AG04449 (cell line): ENCODE measurements at regions of chr1 and their contacts with region 1.

Region 1: DNA sequence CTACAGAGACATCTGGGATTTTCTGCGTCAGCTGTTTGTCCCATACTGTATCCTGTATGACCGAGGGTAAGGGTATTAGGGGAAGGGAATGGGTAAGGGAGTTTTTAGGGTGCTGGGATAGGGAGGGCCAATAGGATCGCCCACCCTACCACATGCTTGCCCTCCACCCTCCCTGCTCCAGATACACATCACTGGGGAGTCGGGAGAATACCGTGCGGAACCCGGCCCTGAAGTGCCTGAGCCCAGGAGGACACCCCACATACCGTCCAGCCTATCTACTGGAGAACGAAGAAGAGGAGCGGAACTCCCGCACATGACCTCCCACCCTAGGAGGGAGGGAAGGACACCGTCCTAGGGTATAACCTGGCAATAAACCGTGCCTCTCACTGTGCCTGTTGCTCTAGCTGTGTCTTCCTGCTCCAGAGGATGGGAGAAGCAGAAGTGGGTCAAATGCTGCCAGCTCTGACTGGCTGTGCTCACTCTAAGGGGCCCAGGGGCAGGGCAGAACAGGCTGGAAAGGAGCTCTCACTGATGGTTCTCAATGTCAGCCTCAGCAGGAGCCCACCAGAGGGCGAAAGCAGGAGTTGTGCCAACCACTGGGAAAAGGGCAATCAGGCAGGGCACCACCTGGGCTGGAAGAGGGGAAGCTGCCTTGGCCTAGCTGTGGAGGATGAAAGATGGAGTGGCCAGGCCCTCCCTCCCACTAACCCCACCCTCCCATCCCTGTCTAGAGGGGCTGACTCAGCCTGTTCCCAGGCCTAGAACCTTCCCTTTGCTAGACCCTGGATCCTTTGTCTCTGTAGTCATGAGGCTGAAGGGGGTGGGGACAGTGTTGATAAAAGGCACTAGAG is 440 bp upstream of the LENEP start:
- DNase-seq: no peak
- H3K4me3 ChIP-seq: no peak overlapping the region
- CTCF ChIP-seq: peak; percentile 40

Region 2: DNA sequence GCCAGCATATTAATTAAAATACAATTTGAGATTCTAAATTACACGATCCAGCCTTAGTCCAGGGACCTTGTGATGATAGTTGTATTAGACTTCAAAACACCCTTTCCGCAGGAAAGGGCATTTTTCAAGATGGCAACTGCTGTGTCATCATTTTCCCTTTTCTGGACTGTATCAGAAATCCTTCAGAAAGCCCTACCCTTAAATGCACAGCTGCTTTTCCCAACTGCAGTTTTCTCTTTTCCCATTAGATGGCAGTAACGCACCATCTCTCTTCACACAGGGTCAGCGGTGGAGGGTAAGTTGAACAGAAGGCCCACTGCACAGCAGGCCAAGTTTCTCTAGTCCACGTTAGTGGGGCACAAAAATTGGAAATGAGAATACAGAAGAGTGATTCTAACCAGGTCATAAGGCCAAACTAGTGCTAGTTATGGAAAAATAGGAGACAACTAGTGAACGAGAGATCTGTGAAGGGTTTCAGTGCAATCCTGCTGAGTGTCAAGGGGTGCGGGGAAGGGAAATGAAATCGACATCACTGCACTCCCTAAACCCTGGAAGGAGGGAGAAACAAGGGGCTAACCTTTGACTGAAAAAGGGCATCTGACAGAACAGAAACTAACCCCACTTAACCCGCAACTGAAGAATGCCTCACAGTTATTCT is 513.1 kb before region 1 on chr1:
- CTCF ChIA-PET with region 1: interaction called, 10 read pairs
- POLR2A ChIA-PET with region 1: no interaction called
- DNase-seq: no peak
- H3K4me3 ChIP-seq: no peak overlapping the region
- CTCF ChIP-seq: peak; percentile 79

Region 3: DNA sequence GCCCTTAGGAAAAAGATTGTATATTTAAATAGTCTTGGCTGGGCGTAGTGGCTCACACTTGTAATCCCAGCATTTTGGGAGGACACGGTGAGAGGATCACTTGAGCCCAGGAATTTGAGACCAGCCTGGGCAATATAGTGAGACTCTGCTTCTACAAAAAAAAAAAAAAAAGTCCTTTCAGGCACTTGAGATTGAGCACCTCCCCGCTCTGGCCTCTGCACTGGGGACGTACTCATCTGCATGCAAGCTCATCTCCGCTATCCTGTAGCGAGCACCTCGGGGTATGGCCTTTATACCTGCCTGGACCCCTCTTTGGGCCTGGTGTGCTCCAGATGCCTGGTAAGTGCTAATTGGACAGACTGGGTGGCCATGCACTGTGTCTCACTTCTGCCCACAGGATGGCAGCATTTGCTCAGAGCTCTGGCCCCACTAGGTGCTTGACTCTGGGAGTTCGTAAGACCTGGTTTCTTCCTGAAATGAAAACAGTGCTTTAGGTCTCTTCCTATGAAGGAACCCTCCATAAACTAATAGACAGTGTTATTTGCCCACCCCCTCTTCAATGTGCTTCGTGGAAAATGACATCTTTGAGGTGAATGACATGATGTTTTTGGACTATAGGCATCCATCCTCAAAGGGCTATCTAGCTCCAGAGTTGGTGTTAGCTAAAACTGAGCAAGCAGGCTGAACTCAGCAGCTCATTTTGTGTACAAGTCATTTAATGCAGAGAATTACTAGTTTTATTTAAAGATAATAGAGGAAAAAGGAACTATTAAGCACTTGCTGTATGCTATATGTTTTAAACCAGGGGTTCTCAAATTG is 323.3 kb before region 1 on chr1:
- CTCF ChIA-PET with region 1: interaction called, 12 read pairs
- POLR2A ChIA-PET with region 1: no interaction called
- DNase-seq: peak; percentile 21
- H3K4me3 ChIP-seq: no peak overlapping the region
- CTCF ChIP-seq: peak; percentile 78

Region 4: GRCh38 chr1:154847891-154848290 is 145.1 kb before region 1 on chr1:
- CTCF ChIA-PET with region 1: no interaction called
- POLR2A ChIA-PET with region 1: no interaction called
- DNase-seq: no peak
- H3K4me3 ChIP-seq: no peak overlapping the region
- CTCF ChIP-seq: no peak

Region 5: DNA sequence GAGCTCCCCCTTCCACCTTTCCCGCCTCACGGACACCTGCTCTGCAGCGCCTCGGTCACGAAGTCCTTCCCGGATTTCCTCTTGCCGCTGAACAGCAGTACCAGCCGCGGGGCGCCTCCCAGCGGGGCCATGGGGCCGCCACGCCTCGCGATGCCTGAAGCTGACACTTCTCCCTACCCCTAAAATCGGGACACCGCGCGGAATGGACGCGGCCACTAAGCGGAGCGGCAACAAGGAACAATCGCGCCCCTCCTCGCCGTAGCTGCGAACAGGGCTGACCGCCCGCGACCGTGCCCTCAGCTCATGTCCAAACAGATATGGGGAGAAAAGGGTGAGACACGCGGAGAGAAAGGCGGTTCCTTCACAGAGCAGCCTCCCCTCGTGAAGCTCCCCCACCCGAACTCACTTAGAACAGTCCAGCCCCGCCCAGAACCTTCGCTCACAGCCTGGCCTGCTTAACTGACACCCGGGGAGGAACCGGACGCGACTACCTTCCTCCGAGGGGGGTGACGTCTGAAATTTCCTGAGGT is 56.3 kb before region 1 on chr1 and contains the start of gene PMVK:
- CTCF ChIA-PET with region 1: interaction called, 15 read pairs
- POLR2A ChIA-PET with region 1: no interaction called
- DNase-seq: peak; percentile 76
- H3K4me3 ChIP-seq: peak within 1 kb of the TSS; percentile 95
- CTCF ChIP-seq: peak; percentile 46

Region 6: DNA sequence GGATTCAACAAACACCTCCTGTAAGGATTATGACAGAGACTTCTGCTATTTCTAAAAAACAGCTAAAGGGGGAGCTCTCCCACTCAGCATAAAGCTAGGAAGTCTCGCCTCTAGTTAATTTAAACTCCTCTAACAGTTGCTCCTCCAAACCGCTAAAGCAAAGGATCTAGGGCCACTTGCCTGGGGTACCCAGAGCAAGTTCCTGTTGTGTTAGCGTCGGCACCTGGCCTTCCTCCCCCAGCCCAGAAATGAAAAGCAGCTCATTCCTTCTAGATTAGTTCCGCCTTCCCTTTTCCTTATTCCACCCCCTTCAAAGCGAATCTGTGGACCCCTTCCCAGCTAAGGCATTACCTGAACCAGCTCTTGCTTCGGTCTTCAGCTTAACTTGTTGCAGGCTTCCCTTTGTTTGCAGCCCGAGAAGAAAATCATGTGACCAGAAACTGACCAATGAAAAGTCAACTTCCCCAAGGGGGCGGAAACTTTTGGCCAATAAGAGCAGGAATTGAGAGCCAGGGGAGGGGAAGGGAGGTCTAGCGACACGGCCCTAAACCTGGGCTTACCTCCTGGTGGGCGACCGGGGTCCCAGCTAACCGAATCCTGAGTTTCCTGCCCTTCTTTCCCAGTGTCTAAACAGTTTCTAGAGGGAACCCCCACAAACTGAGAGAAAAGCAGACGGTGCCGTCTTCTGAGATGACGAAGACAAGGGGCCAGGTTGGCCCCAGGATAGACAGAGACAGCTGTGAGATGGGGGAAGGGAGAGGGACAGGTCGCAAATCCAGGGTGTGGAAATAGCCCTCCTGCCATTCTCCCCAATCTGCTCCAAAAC is 37.0 kb before region 1 on chr1 and contains the start of gene PBXIP1:
- CTCF ChIA-PET with region 1: interaction called, 70 read pairs
- POLR2A ChIA-PET with region 1: interaction called, 8 read pairs
- DNase-seq: peak; percentile 50
- H3K4me3 ChIP-seq: peak within 1 kb of the TSS; percentile 66
- CTCF ChIP-seq: peak; percentile 31

Region 7: GRCh38 chr1:154974063-154974807 is 18.7 kb before region 1 on chr1 and contains the start of gene CKS1B:
- CTCF ChIA-PET with region 1: interaction called, 176 read pairs
- POLR2A ChIA-PET with region 1: interaction called, 11 read pairs
- DNase-seq: peak; percentile 100
- H3K4me3 ChIP-seq: peak within 1 kb of the TSS; percentile 75
- CTCF ChIP-seq: no peak

Region 8: DNA sequence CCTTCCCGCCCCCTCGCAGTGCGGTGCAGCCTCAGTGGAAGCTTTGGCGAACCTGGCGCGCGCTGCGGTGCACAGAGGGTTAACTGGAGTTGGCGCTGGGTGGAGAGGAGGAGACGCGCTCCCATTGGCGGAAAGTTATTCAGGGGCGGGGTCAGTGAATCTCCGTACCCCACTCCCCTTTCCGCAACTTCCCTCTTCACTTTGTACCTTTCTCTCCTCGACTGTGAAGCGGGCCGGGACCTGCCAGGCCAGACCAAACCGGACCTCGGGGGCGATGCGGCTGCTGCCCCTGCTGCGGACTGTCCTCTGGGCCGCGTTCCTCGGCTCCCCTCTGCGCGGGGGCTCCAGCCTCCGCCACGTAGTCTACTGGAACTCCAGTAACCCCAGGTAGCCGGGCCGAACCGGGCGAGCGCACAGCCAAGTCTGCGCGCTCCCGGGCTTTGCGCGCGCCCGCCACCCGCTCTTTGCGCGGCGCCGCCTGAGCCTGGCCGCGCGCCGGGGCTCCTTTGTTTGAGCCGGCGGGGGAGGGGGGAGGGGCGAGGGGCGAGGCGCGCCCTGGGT is 70.7 kb after region 1 on chr1 and contains the start of gene EFNA4:
- CTCF ChIA-PET with region 1: interaction called, 30 read pairs
- POLR2A ChIA-PET with region 1: no interaction called
- DNase-seq: no peak
- H3K4me3 ChIP-seq: peak within 1 kb of the TSS; percentile 96
- CTCF ChIP-seq: no peak

Region 9: DNA sequence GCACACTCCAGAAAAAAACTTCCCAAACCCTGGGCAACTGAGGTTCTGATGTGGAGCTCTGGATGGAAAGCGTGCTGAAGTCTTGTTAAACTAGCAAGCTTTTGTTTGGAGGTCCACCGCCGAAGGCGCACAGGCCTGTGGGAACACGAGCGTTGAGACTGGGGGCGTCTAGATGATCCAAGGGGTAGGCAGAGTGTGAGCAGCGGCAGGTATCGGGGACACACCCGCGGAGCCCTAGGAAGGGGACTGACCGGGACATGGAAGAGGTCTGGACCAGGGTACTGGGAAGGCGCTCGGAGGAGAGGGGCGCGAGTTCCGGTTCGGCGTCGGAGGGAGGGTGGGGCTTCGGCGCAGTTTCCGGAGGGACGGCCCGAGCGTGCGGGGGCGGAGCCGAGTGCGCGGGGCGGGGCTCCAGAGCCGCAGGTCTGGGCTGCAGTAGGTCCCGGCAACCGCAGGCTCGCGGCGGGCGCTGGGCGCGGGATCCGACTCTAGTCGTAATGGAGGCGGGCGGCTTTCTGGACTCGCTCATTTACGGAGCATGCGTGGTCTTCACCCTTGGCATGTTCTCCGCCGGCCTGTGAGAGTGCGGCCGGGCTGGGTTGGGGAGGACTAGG is 142.6 kb after region 1 on chr1 and contains the start of gene SLC50A1:
- CTCF ChIA-PET with region 1: no interaction called
- POLR2A ChIA-PET with region 1: no interaction called
- DNase-seq: peak; percentile 46
- H3K4me3 ChIP-seq: peak within 1 kb of the TSS; percentile 94
- CTCF ChIP-seq: no peak

Region 10: DNA sequence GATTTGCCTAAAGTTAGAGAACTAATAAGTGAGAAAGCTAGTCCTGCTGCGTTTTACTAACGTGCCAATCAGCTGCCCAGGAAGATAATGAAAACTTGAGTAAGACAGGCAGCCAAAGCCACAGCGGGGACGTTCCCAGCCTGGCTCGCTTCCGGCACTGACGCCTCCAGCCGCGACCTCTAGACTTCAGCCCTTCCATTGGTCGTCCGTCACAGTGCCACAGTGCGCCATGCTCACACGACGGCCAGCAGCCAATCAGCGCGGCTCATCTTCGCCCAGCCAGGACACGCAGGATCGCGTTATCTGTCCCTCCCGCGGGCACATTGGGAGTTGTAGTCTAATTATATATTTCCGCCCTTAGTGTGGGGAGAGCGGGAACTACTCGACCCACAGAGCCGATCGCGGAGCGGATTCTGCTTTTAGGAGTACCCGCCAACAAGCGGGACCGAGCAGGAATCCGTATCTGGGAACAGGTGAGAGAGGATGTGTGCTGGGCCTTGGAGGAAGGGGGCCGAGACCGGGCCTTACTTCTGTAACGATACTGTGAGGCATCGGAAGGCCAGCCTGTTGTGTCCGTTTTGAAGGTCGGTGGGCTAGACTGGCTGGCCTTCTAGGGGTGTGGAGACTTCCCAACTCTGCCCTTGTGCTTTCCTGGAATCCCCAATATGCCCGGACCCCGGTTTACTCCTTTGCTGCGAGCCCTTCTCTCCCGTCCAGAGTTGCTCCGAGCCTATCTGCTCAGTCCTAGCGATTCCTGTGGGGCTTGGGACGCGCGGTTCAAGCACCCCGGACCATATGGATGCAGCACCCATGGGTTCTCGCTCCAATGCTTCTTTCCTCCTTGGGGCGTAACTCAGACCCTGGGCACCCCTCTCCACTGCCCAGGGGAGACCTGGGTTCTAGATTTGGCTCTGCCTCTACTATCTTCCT is 315.8 kb after region 1 on chr1 and contains the start of gene FDPS:
- CTCF ChIA-PET with region 1: no interaction called
- POLR2A ChIA-PET with region 1: no interaction called
- DNase-seq: peak; percentile 94
- H3K4me3 ChIP-seq: peak within 1 kb of the TSS; percentile 84
- CTCF ChIP-seq: no peak